Motor neuron (in vitro differentiated cells): ENCODE measurements at regions of chr1 and their contacts with region 1.

Region 1: DNA sequence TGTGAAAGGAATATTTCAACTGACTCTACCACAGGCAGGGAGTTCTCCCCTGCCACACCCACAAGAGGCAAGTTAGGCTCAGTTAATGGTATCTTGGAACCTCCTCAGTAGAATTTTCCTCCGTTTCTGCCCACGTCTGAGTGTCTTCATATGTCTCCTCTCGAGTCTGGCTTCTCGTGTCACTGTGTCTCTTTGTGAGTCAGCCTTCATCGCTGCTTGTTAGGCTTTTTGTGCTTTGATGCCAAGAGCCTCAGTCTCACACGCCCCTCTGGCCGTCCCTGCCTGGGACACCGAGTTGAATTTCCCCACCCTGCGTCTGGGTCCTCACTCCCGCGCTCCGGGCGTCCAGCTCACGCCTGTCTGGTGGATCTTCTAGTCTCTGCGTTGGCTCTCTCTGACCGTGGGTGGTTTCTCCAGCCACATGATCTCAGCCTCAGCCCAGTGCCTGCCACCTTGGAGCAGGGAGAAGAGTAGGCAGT is 125.7 kb upstream of the GADD45A start:
- ATAC-seq: peak in 6 of 8 experiments; percentile 21 to 91 (median 66)
- H3K4me3 ChIP-seq: no peak overlapping the region
- H3K27ac ChIP-seq: no peak overlapping the region
- H3K4me1 ChIP-seq: no peaks in the 10 kb centered on the region

Region 2: GRCh38 chr1:67700692-67701410 is 141.6 kb after region 1 on chr1:
- in situ Hi-C with region 1: loop called in 1 of 9 experiments (anchors 10 kb)
- ATAC-seq: peak; percentile 67 to 97 (median 94)
- H3K4me3 ChIP-seq: no peak overlapping the region
- H3K27ac ChIP-seq: no peak overlapping the region
- H3K4me1 ChIP-seq: peaks cover 0 to 7% of the 10 kb centered on the region in 2 donors